ENCODE measurements at regions of chr12 and their contacts with region 1.

Region 1: GRCh38 chr12:70590051-70590450 is 47.2 kb downstream of the PTPRB start:
- DNase-seq: peak; percentile 76
- H3K4me3 ChIP-seq: no peak overlapping the region
- H3K27ac ChIP-seq: no peak overlapping the region
- H3K4me1 ChIP-seq: no peaks in the 10 kb centered on the region
- H3K27me3 ChIP-seq: no peaks in the 10 kb centered on the region
- CTCF ChIP-seq: peak; percentile 90

Region 2: DNA sequence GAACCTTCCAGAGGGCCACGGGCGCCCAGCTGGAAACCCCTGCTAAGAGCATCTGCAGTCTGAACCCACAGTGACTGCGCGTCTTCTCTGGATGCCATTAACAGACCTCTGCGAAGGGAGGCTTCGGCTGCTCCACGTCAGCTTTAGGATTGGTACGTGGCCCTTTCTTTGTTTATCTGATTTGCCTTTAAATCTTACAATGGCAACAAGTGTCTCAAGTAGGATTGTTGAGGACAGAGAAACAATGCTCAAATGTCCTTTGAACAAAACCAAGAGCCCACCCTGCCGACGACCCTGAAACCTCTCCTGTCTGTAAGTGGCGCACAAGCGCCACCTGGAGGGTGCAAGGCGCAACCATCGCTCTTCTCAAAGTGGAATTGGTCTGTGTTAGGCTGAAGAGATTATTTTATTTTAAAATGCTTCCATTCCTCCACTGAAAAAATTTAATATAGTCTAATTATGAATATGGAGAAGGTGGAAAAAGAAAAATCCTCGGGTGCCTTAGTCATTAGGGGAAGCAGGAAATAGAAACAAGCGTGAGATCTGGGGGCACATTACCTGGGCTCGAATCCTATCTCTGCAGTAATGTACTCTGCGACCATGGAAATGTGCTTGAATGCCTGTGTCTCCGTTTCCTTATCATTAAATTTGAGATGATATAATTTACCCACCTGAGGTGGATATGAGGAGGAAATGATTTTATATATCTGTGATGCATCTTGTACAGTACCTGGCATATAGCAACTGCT is 129.8 kb after region 1 on chr12:
- CTCF ChIA-PET with region 1: interaction called, 8 read pairs
- POLR2A ChIA-PET with region 1: no interaction called
- intact Hi-C with region 1: loop called (anchors 1 kb)
- DNase-seq: peak; percentile 58
- H3K4me3 ChIP-seq: no peak overlapping the region
- H3K27ac ChIP-seq: no peak overlapping the region
- H3K4me1 ChIP-seq: peaks cover 11% of the 10 kb centered on the region
- H3K27me3 ChIP-seq: no peaks in the 10 kb centered on the region
- CTCF ChIP-seq: peak; percentile 97

Measured in A673 (cell line).